Thyroid gland (tissue), 4 donors: ENCODE measurements at regions of chr1 and their contacts with region 1.

Region 1: DNA sequence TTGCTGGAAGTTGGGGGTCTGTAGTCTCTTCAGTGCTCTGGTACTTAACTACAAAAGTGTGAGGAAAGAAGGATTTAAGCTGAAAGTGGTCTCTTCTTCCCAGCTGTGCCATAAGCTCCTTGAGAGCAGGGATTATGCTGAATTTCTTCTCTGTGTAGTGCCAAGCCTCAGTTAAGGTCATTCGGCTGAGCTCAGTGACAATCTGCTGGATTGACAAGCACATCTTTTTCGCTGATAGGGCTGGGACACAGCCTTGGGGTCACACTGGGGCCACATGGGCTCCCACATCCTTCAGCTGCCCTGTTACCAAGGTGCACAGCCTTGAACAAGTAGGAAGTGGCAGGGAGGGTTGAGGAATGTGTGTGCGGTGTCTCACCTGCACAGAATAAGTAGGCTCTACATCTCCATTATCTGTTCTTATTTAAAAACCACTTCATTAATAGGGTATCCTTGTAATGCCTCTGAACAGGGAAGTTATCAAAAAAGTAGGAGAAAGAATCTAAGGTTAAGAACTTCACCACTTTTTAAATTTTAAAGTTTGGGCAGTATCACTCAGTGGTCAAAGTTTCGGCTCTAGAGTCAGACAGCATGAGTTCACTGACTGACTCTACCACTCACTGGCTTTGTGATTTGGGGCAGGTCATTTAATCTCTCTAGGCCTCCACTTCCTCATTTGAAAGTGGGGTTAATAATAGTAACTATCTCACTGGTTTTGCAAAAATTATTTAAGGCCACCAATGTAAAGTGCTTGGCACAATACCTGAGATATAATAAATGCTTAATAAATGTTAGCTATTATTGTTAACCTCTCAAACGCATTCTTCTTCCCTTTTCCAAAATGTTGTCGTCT is 10.3 kb downstream of the ZBTB40 start:
- DNase-seq: no peak
- H3K4me3 ChIP-seq: no peak overlapping the region
- H3K27ac ChIP-seq: no peak overlapping the region
- H3K4me1 ChIP-seq: peaks cover 0 to 7% of the 10 kb centered on the region in 2 donors
- H3K27me3 ChIP-seq: no peaks in the 10 kb centered on the region
- CTCF ChIP-seq: no peak
- POLR2A ChIP-seq: no peak

Region 2: DNA sequence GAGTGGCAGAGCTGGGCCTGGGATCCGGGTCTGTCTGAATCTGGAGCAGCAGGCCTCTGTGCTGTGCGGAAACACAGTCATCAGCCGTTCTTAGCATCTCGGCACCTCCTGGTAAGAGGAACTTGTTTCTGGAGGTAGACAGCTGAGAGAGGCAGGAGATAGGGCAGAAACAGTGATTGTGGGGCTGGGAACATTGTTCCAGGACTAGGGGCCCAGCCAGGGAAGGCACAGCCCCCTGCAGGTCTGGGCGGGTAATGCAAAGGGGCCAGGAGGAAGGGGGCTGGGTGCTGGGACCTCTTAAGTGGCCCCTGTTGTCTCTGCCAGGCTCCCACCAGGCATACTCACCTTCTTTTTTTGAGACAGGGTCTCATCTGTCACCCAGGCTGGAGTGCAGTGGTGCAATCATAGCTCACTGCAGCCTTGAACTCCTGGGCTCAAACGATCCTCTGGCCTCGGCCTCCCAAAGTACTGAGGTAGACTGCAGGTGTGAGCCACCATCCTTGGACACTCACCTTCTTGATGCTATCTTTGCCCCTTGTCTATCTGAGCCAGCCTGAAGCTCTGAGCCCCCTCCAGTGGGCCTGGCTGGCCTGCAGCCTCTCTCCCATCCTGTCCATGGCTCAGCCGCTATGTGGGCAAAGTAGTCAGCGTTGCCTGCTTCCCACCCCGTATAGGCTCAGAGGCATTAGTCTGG is 144.5 kb before region 1 on chr1:
- intact Hi-C with region 1: no loop called
- DNase-seq: no peak
- H3K4me3 ChIP-seq: no peak overlapping the region
- H3K27ac ChIP-seq: no peak overlapping the region
- H3K4me1 ChIP-seq: no peaks in the 10 kb centered on the region
- H3K27me3 ChIP-seq: no peaks in the 10 kb centered on the region
- CTCF ChIP-seq: peak in 2 of 6 experiments; percentile 17 to 19
- POLR2A ChIP-seq: no peak

Region 3: GRCh38 chr1:22364764-22365163 is 97.1 kb before region 1 on chr1:
- intact Hi-C with region 1: no loop called
- DNase-seq: peak; percentile 28 to 55
- H3K4me3 ChIP-seq: no peak overlapping the region
- H3K27ac ChIP-seq: peak overlapping the region in 2 of 3 donors; percentile 65 to 87
- H3K4me1 ChIP-seq: peaks cover 49 to 63% of the 10 kb centered on the region in 2 donors
- H3K27me3 ChIP-seq: no peaks in the 10 kb centered on the region
- CTCF ChIP-seq: peak in 1 of 6 experiments; percentile 3
- POLR2A ChIP-seq: no peak

Region 4: GRCh38 chr1:22518379-22518778 is 56.5 kb after region 1 on chr1:
- intact Hi-C with region 1: loop called (anchors 10 kb)
- DNase-seq: peak; percentile 34 to 38
- H3K4me3 ChIP-seq: no peak overlapping the region
- H3K27ac ChIP-seq: no peak overlapping the region
- H3K4me1 ChIP-seq: no peaks in the 10 kb centered on the region
- H3K27me3 ChIP-seq: no peaks in the 10 kb centered on the region
- CTCF ChIP-seq: no peak
- POLR2A ChIP-seq: no peak

Region 5: DNA sequence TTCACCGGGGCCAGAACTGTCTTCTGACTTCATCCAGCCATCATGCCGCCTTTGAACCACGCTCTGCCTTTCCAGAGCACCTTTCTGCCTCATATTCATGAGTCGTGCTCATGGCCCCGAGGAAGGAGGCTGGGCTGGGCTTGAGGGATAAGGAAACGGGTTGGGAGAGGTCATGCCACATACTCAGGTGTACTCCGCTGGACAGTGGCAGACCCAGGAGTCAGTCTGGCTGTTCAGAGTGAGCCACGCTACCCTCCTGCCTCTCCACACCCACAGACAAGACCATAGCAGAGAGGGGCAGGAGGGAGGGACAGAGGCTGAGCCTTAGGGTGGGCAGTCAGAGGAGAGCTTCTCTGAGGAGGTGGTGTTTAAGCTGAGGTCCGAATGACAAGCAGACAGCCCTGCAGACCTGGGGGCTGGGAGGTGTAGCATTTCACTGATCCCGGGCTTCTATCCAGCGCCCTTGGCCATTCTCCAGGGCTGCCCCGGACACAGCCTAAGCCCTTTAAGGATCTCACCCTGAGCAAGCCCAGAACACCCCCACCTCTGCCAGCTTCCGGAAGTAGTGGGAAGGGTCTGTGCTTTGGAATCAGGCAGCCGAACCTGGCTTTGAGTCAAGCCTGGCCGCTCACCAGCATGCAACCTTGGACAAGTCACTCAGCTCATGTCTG is 408.4 kb after region 1 on chr1:
- intact Hi-C with region 1: no loop called
- DNase-seq: peak; percentile 95
- H3K4me3 ChIP-seq: no peak overlapping the region
- H3K27ac ChIP-seq: peak overlapping the region; percentile 45 to 78 (median 60)
- H3K4me1 ChIP-seq: peaks cover 13 to 26% of the 10 kb centered on the region in 2 donors
- H3K27me3 ChIP-seq: no peaks in the 10 kb centered on the region
- CTCF ChIP-seq: no peak
- POLR2A ChIP-seq: no peak